Heart right ventricle (tissue), 16 donors: ENCODE measurements at regions of chr10 and their contacts with region 1.

Region 1: GRCh38 chr10:119616882-119617570 is 20.3 kb upstream of the TIAL1 start:
- DNase-seq: peak; percentile 21 to 39
- ATAC-seq: peak in 1 of 8 donors; percentile 61
- H3K4me3 ChIP-seq: no peak overlapping the region
- H3K27ac ChIP-seq: no peak overlapping the region
- H3K4me1 ChIP-seq: peaks cover 0 to 37% (median 18%) of the 10 kb centered on the region in 9 donors
- H3K27me3 ChIP-seq: no peaks in the 10 kb centered on the region
- CTCF ChIP-seq: peak in 3 of 9 donors; percentile 25 to 44 (median 26)

Region 2: DNA sequence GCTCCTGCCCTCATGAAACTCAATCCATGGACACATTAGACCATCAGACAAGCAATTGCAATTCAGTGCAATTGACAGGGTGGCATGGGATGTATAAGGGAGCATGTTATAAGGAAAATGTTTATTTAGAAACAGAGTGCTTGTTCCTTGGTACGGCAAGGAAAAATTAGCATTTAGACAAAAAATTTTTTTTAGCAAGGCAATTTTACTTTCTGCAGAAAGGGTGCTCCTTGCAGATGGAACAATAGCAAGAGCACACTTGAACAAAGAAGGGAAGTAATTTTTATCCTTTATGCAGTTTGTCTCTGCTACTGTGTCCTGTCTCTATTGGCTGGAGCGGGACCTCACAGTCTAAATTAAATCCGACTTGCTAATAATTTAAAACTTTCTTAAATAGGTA is 28.0 kb after region 1 on chr10:
- intact Hi-C with region 1: loop called in 4 of 10 experiments (anchors 5 kb)
- DNase-seq: no peak
- ATAC-seq: no peak
- H3K4me3 ChIP-seq: no peak overlapping the region
- H3K27ac ChIP-seq: no peak overlapping the region
- H3K4me1 ChIP-seq: no peaks in the 10 kb centered on the region
- H3K27me3 ChIP-seq: no peaks in the 10 kb centered on the region
- CTCF ChIP-seq: no peak

Region 3: DNA sequence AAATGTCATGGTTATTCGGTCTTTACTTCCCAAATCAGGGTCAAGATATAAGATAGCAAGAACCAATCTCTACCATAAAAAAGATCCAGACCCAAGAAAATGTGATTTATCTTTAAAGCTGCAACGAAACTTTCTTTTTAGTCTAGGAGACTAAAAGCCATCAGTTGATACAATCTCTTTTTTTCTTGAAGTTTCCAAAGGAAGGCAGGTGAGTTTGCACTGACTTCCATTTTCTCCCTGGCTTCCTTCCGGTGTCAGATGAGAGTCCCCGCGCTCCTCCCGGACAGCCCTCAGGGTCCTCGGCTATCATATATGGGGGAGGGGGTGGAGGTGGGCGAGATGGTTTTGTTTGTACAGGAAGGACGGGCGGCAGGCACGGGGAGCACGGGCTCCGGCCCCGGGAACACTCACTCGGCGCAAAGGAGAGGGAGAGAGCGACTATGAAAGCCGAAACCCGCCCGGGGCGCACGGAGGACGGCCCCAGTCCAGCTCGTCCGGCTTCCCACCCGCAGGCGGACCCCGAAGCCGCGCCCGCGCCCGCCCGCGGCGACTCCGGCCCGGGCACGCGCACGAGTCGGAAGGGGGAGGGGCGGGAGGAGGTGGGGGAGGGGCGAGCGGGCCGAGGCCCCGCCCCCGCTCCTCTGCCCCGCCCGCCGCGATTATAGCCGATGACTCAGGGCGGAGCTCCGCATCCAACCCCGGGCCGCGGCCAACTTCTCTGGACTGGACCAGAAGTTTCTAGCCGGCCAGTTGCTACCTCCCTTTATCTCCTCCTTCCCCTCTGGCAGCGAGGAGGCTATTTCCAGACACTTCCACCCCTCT is 33.9 kb after region 1 on chr10 and contains the start of gene BAG3:
- intact Hi-C with region 1: loop called in 4 of 10 experiments (anchors 5 kb)
- DNase-seq: peak; percentile 94 to 95
- ATAC-seq: peak; percentile 89 to 95 (median 92)
- H3K4me3 ChIP-seq: peak within 1 kb of the TSS; percentile 59 to 96 (median 86)
- H3K27ac ChIP-seq: peak within 1 kb of the TSS; percentile 92 to 100 (median 98)
- H3K4me1 ChIP-seq: peaks cover 20 to 41% (median 34%) of the 10 kb centered on the region in 9 donors
- H3K27me3 ChIP-seq: peaks cover 0 to 3% (median 0%) of the 10 kb centered on the region in 7 donors
- CTCF ChIP-seq: no peak
- total RNA-seq, gene BAG3: 115 to 191 (median 145) TPM